ENCODE measurements at regions of chr14 and their contacts with region 1.

Region 1: GRCh38 chr14:68795597-68796417 is 2.9 kb upstream of the ZFP36L1 start:
- DNase-seq: peak; percentile 89 to 95 (median 91)
- H3K4me3 ChIP-seq: peak overlapping the region; percentile 66 to 89 (median 67)
- H3K27ac ChIP-seq: peak overlapping the region; percentile 100
- H3K4me1 ChIP-seq: peaks cover 0 to 9% (median 7%) of the 10 kb centered on the region in 3 donors
- H3K27me3 ChIP-seq: no peaks in the 10 kb centered on the region
- CTCF ChIP-seq: peak; percentile 58

Region 2: GRCh38 chr14:68548194-68549056 is 247.4 kb before region 1 on chr14:
- intact Hi-C with region 1: loop called (anchors 10 kb)
- DNase-seq: peak; percentile 97 to 99 (median 98)
- H3K4me3 ChIP-seq: no peak overlapping the region
- H3K27ac ChIP-seq: peak overlapping the region; percentile 87 to 94
- H3K4me1 ChIP-seq: peaks cover 24 to 48% (median 30%) of the 10 kb centered on the region in 3 donors
- H3K27me3 ChIP-seq: no peaks in the 10 kb centered on the region
- CTCF ChIP-seq: no peak

Region 3: DNA sequence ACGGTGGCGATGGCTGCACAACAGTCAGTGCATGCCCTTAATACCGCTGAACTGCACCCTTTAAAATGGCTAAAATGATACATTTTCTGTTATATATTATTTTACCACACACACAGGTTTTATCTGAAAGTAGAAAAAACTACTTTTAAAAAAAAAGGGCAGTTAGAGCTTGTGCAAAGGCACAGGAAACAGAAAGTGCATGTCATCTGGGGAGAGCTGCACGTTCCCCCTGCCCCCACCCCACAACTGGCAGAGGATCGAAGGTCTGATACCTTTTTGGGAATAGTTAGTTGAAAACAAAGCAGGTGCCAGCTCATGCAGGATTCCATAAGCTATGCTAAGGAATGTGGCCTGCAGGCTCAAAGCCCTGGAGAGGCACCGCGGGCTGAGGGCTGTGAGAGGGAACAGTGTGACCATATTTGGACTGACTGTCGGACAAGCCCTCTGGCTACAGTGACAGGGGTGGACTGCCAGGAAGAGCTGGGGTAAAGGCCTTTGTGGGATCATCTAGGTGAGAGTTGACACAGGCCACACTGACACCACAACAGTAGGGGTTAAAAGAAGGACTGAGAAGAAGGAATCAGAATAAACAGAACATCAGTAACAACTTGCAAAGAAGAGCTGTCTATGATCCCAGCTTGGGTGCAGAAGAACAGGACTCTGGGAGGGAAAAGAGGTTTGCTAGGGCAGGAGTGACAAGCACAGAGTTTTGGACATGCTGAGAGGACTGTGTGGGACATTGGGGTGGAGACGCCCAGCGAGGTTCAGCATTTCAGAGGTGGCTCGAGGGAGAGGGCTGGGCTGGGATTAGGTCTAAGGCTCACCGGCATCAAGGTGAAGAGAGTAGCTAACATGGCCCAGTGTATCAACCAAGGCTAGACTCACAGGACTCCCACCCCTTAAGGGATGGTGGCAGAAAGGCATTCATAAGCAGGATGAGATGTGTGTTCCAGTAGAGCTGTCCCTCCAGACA is 128.7 kb after region 1 on chr14:
- intact Hi-C with region 1: no loop called
- DNase-seq: no peak
- H3K4me3 ChIP-seq: no peak overlapping the region
- H3K27ac ChIP-seq: no peak overlapping the region
- H3K4me1 ChIP-seq: peaks cover 0 to 5% (median 0%) of the 10 kb centered on the region in 3 donors
- H3K27me3 ChIP-seq: no peaks in the 10 kb centered on the region
- CTCF ChIP-seq: no peak